GM18951 (cell line): ENCODE measurements at regions of chr6 and their contacts with region 1.

Region 1: DNA sequence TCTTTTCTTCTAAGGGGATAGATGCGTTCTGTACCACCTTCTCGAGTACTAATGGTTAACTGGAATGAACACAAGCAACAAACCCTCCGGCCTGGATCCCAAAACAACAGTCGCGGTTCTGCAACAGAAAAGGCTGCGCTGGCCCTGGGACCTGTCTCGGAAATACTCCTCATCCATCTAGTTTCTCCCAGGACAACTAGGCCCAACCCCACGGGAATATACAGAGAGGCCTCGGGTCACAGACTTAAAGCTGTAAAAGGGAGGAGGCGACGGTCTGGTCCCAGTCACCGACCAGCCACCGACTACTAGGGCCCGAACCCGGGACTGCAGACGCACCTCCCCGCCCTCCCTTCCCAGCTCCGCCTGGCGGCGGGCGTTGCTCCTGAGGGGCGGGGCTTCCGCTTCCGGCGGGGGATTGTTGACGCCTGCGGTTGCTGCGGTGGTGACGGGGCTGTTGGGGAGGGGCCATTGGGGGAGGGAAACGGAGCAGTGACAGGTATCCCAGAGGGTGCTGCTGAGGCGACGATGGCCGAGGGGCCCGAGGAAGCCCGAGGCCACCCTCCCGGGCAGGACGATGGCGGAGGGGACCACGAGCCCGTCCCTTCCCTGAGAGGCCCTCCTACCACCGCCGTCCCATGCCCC is at the start of gene FAM8A1:
- POLR2A ChIP-seq: peak; percentile 63

Region 2: DNA sequence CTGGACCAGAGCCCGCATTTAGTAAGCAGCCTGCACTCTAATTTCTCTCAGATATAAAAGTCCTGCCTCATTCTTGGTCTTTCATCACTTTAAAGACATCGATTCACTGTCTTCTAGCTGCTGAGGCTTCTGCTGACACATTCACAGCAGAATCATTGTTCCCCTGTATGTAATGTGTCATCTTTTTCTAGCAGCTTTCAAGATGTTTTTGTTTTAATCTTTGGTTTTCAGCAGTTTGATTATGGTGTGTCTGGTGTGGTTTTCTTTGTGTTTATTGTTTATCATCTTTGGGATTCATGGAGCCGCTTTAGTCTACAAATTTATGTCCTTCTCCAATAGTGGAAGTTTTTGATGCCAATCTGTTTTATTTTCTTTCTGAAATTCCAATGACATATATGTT is 655.4 kb before region 1 on chr6:
- in situ Hi-C with region 1: no loop called
- POLR2A ChIP-seq: no peak

Region 3: GRCh38 chr6:17156112-17156921 is 443.7 kb before region 1 on chr6:
- in situ Hi-C with region 1: loop called (anchors 25 kb)
- POLR2A ChIP-seq: no peak

Region 4: GRCh38 chr6:17224056-17224455 is 375.9 kb before region 1 on chr6:
- in situ Hi-C with region 1: no loop called
- POLR2A ChIP-seq: no peak

Region 5: GRCh38 chr6:17816921-17817611 is 217.1 kb after region 1 on chr6:
- in situ Hi-C with region 1: loop called (anchors 10 kb)
- POLR2A ChIP-seq: no peak